Activated CD4-positive, alpha-beta T cell treated with anti-CD3 and anti-CD28 coated beads for 36 hours (primary cell): ENCODE measurements at regions of chr1 and their contacts with region 1.

Region 1: GRCh38 chr1:201709564-201710295 is 119.2 kb upstream of the IPO9 start:
- DNase-seq: peak; percentile 80
- ATAC-seq: peak; percentile 95
- H3K4me3 Mint-ChIP-seq: no peak overlapping the region
- H3K27ac Mint-ChIP-seq: no peak overlapping the region
- H3K4me1 Mint-ChIP-seq: no peaks in the 10 kb centered on the region
- H3K27me3 Mint-ChIP-seq: no peaks in the 10 kb centered on the region

Region 2: DNA sequence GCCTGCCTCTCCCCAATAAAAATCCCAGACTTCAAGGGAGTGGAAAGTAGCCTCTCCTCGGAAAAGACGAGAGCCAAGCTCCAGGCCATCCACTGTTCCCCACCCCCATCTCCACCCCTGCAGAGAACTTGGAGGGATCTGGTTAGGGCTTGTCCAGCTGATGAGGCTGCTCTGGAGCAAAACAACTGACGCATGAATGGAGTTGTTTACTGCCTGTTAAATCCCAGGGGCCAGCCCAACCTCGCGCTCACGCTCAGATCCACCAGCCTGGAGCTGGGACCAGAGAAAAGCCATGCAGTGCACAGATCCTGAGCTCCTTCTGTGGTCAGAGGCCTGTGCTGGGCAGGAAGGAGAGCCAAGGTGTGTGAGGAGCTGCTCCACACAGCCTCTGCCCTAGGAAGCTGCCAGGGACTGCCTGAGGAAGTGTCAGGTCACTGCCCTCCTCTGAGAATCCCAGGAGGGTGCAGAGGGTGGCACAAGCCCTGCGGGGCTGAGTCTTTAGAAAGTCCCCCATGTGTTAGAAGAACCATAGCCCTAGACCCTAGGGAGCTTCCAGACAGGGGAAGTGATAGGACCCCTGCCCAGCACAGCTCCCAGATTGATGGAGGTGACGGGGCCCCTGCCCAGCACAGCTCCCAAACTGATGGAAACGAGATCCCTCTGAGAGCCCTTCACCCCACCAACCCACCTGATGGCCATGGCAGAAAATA is 10.2 kb after region 1 on chr1:
- CTCF ChIA-PET with region 1: interaction called, 44 read pairs
- POLR2A ChIA-PET with region 1: no interaction called
- intact Hi-C with region 1: no loop called
- DNase-seq: no peak
- ATAC-seq: no peak
- H3K4me3 Mint-ChIP-seq: no peak overlapping the region
- H3K27ac Mint-ChIP-seq: no peak overlapping the region
- H3K4me1 Mint-ChIP-seq: no peaks in the 10 kb centered on the region
- H3K27me3 Mint-ChIP-seq: peaks cover 2% of the 10 kb centered on the region

Region 3: DNA sequence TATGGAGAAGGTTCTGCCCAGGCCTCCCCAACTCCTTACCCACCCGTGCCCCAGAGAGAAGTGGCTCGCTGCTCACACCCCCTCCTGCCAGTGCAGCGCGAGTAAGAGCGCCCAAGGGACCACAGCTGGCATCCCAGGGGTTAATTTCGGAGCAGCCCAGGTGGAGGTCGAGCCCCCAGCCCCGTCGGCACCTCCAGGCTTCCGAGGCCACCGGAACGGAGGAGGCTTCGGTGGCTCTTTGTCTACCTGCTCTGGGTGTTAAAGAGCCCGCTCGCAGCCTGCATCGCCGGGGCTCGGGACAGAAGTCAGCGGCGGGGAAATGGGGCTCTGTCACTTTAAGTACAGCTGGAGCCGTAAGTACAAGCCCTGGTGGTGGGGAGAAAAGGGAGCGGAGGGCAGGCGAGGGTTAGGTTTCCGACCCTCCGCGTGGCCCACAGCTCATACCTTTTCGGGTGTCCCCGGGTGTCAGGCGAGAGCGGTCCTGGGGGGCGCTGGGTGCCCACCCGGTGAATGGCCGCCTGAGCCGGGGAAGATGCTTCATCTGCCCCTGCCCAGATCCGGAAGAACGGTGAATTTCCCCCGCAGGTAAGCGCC is 29.9 kb after region 1 on chr1:
- CTCF ChIA-PET with region 1: interaction called, 6 read pairs
- POLR2A ChIA-PET with region 1: interaction called, 5 read pairs
- intact Hi-C with region 1: loop called in 1 of 2 experiments (anchors 2 kb)
- DNase-seq: peak; percentile 70
- ATAC-seq: peak; percentile 94
- H3K4me3 Mint-ChIP-seq: peak overlapping the region; percentile 73
- H3K27ac Mint-ChIP-seq: no peak overlapping the region
- H3K4me1 Mint-ChIP-seq: peaks cover 9% of the 10 kb centered on the region
- H3K27me3 Mint-ChIP-seq: peaks cover 9% of the 10 kb centered on the region

Region 4: GRCh38 chr1:201792534-201793305 is 83.0 kb after region 1 on chr1:
- CTCF ChIA-PET with region 1: interaction called, 144 read pairs
- POLR2A ChIA-PET with region 1: no interaction called
- intact Hi-C with region 1: loop called (anchors 1 kb)
- DNase-seq: peak; percentile 72
- ATAC-seq: peak; percentile 80
- H3K4me3 Mint-ChIP-seq: no peak overlapping the region
- H3K27ac Mint-ChIP-seq: no peak overlapping the region
- H3K4me1 Mint-ChIP-seq: peaks cover 6% of the 10 kb centered on the region
- H3K27me3 Mint-ChIP-seq: no peaks in the 10 kb centered on the region